Sigmoid colon (tissue), 7 donors: ENCODE measurements at regions of chr1 and their contacts with region 1.

Region 1: GRCh38 chr1:225772323-225772768 is 5.3 kb upstream of the SRP9 start:
- DNase-seq: peak; percentile 92
- H3K4me3 ChIP-seq: no peak overlapping the region
- H3K27ac ChIP-seq: peak overlapping the region; percentile 64 to 92 (median 72)
- H3K4me1 ChIP-seq: peaks cover 0 to 76% (median 74%) of the 10 kb centered on the region in 4 donors
- H3K27me3 ChIP-seq: no peaks in the 10 kb centered on the region
- CTCF ChIP-seq: peak; percentile 76 to 92 (median 84)
- EP300 ChIP-seq: no peak
- POLR2A ChIP-seq: no peak

Region 2: GRCh38 chr1:225559326-225559725 is 213.0 kb before region 1 on chr1:
- intact Hi-C with region 1: loop called (anchors 5 kb)
- DNase-seq: no peak
- H3K4me3 ChIP-seq: no peak overlapping the region
- H3K27ac ChIP-seq: no peak overlapping the region
- H3K4me1 ChIP-seq: peaks cover 0 to 10% (median 0%) of the 10 kb centered on the region in 4 donors
- H3K27me3 ChIP-seq: no peaks in the 10 kb centered on the region
- CTCF ChIP-seq: no peak
- EP300 ChIP-seq: no peak
- POLR2A ChIP-seq: no peak

Region 3: GRCh38 chr1:225662155-225662554 is 110.2 kb before region 1 on chr1:
- intact Hi-C with region 1: loop called (anchors 2 kb)
- DNase-seq: no peak
- H3K4me3 ChIP-seq: no peak overlapping the region
- H3K27ac ChIP-seq: peak overlapping the region; percentile 78 to 100 (median 99)
- H3K4me1 ChIP-seq: peaks cover 0 to 53% (median 40%) of the 10 kb centered on the region in 4 donors
- H3K27me3 ChIP-seq: no peaks in the 10 kb centered on the region
- CTCF ChIP-seq: no peak
- EP300 ChIP-seq: peak; percentile 88 to 95 (median 92)
- POLR2A ChIP-seq: no peak

Region 4: GRCh38 chr1:225794954-225795353 is 22.6 kb after region 1 on chr1:
- intact Hi-C with region 1: no loop called
- DNase-seq: no peak
- H3K4me3 ChIP-seq: no peak overlapping the region
- H3K27ac ChIP-seq: no peak overlapping the region
- H3K4me1 ChIP-seq: no peaks in the 10 kb centered on the region
- H3K27me3 ChIP-seq: no peaks in the 10 kb centered on the region
- CTCF ChIP-seq: no peak
- EP300 ChIP-seq: no peak
- POLR2A ChIP-seq: no peak

Region 5: GRCh38 chr1:225825607-225826007 is 53.3 kb after region 1 on chr1:
- intact Hi-C with region 1: no loop called
- DNase-seq: peak; percentile 56
- H3K4me3 ChIP-seq: no peak overlapping the region
- H3K27ac ChIP-seq: no peak overlapping the region
- H3K4me1 ChIP-seq: peaks cover 0 to 37% (median 36%) of the 10 kb centered on the region in 4 donors
- H3K27me3 ChIP-seq: no peaks in the 10 kb centered on the region
- CTCF ChIP-seq: no peak
- EP300 ChIP-seq: no peak
- POLR2A ChIP-seq: no peak